GM10248 (cell line): ENCODE measurements at regions of chr2 and their contacts with region 1.

Region 1: DNA sequence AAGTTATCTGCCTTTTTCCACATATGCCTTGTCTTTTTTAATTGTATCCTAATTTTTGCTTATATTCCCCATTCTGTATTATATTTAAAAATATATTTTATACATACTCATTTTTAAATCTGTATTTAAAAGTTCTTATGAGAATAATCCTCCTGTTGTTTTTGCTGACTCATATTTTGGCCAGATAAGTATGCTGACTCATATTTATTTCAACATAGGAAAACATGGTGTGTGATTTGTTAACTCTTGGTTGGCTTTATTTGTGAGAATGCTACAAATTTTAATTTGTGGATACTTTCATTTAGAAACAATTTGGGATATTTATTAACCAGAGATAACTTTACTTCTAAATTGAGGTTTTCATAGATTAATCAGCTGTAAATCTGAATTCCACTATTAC is 587.7 kb downstream of the CPS1 start:
- DNase-seq: no peak
- CTCF ChIP-seq: no peak

Region 2: GRCh38 chr2:211085056-211085680 is 58.9 kb before region 1 on chr2:
- CTCF ChIA-PET with region 1: no interaction called
- POLR2A ChIA-PET with region 1: no interaction called
- DNase-seq: peak; percentile 10
- CTCF ChIP-seq: peak; percentile 55

Region 3: GRCh38 chr2:211157856-211158463 is 13.9 kb after region 1 on chr2:
- CTCF ChIA-PET with region 1: interaction called, 12 read pairs
- POLR2A ChIA-PET with region 1: no interaction called
- DNase-seq: peak; percentile 32
- CTCF ChIP-seq: peak; percentile 81